ENCODE measurements at regions of chr17 and their contacts with region 1.

Region 1: DNA sequence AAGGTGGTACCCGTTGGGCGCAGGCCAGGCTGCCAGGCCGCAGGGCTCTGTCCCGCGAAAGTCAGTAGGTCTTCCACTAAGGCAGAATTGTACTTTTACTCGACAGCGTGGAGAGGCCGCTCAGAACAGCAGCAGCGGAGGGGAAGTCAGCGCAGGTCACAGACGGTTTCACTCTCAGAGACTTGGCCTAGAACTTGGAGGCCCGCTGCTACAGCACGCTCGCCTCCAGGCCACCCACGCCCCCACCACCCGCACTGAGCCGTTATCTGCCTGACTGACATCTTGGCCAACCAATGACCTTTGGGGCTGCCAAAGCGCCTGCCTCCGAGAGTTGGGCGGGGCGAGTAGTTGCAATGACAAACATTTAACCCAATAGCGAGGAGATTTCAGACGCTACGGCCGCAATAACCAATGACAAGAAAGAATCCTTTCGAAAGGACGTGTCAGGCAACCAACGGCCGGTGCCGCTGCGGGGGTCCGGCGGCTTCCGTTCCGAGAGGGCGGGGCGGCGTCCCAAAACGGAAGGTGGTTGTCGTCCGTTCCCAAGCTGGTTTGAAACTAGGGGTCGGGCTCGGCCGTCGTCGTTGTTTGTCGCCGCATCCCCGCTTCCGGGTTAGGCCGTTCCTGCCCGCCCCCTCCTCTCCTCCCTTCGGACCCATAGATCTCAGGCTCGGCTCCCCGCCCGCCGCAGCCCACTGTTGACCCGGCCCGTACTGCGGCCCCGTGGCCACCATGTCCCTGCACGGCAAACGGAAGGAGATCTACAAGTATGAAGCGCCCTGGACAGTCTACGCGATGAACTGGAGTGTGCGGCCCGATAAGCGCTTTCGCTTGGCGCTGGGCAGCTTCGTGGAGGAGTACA is at the start of gene DCAF7:
- DNase-seq: peak; percentile 100
- H3K4me3 ChIP-seq: peak within 1 kb of the TSS; percentile 66 to 95 (median 81)
- H3K27ac ChIP-seq: peak within 1 kb of the TSS; percentile 87 to 95 (median 89)
- H3K4me1 ChIP-seq: peaks cover 0 to 49% (median 43%) of the 10 kb centered on the region in 4 donors
- H3K27me3 ChIP-seq: no peaks in the 10 kb centered on the region
- CTCF ChIP-seq: no peak
- EP300 ChIP-seq: no peak
- POLR2A ChIP-seq: peak; percentile 48 to 57
- total RNA-seq, gene DCAF7: 19.7 to 28.9 (median 23.5) TPM

Region 2: DNA sequence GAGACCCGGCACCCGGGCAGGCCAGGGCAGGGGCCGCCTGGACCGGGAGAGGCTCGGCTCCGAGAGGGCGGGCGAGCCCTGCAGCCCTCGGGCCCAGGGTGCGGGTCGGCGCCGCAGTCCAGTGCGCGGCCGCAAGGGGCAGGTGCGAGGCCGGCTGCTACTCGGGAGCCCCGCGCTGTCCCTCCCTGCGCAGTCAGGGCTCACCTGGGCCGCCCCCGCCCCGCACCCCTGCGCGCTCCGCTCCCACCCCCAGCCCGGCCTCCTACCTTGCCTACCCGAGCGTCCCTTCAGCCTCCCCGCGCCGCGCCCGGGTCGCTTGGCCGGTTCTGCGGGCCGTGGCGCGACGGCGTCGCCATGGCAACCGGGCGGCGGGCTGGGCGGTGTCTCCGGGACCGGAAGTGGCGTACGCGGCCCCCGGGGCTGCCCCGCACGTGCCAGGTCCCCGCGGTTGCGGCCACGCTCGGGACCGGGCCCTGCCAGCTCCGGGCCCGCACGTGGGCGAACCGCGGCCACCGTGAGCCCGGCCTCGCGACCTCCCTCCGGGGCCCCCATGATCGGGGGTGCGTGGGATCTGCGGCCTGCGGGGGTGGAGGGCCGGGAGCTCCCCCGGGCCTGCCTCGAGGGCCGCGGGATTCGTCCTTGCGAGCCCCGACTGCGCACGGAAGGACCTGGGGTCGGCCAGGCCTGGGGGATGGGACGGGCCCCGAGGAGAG is 104.0 kb before region 1 on chr17 and contains the start of gene CYB561:
- intact Hi-C with region 1: loop called (anchors 1 kb)
- DNase-seq: peak; percentile 89
- H3K4me3 ChIP-seq: peak within 1 kb of the TSS; percentile 41 to 71 (median 63)
- H3K27ac ChIP-seq: peak within 1 kb of the TSS; percentile 67 to 80 (median 74)
- H3K4me1 ChIP-seq: peaks cover 0 to 28% (median 18%) of the 10 kb centered on the region in 4 donors
- H3K27me3 ChIP-seq: no peaks in the 10 kb centered on the region
- CTCF ChIP-seq: peak in 3 of 4 experiments; percentile 17 to 52 (median 41)
- EP300 ChIP-seq: no peak
- POLR2A ChIP-seq: no peak
- total RNA-seq, gene CYB561: 6.3 to 16.4 (median 12.9) TPM

Region 3: DNA sequence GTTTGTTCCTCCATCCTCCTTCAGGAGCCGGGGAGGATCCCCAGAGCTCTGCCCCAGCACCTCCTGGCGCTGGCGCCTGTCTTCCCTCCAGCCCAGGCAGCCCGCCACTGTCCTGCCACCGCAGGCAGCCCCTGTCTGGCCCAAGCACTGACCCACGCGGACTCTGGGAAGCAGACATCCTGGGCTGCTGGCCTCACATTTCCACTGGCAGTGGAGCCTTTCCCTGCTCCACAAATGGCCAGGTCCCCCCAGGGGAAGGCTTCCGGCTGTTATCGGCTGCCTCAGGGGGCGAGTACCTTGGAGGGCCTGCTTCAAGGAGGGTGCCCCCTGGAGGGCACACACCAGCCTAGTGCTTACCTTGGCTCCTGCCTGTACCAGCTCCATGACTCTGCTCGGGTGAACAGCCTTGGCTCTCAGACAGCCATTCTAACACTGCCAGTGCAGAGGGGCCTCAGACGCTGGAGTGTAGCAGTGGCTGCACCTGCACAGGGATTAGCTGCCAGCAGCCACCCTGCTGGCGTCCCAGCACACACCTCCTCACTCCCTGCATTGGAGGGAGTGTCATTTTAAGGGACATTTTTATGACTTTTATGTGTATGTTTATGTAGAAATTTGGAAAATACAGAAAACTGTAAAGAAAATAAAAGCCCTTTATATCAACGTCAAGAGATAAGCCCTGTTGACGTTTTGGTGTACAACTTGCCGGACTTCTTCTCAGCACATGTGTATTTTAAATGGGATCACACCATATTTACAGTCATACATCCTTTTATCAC is 52.3 kb before region 1 on chr17:
- intact Hi-C with region 1: no loop called
- DNase-seq: no peak
- H3K4me3 ChIP-seq: no peak overlapping the region
- H3K27ac ChIP-seq: no peak overlapping the region
- H3K4me1 ChIP-seq: no peaks in the 10 kb centered on the region
- H3K27me3 ChIP-seq: peaks cover 0 to 14% (median 0%) of the 10 kb centered on the region in 3 donors
- CTCF ChIP-seq: no peak
- EP300 ChIP-seq: no peak
- POLR2A ChIP-seq: no peak

Region 4: GRCh38 chr17:63564562-63564961 is 14.4 kb after region 1 on chr17:
- intact Hi-C with region 1: loop called (anchors 1 kb)
- DNase-seq: no peak
- H3K4me3 ChIP-seq: no peak overlapping the region
- H3K27ac ChIP-seq: no peak overlapping the region
- H3K4me1 ChIP-seq: peaks cover 0 to 13% (median 4%) of the 10 kb centered on the region in 4 donors
- H3K27me3 ChIP-seq: no peaks in the 10 kb centered on the region
- CTCF ChIP-seq: no peak
- EP300 ChIP-seq: no peak
- POLR2A ChIP-seq: no peak

Region 5: GRCh38 chr17:63600569-63601438 is 50.6 kb after region 1 on chr17 and contains the start of gene TACO1:
- intact Hi-C with region 1: loop called (anchors 5 kb)
- DNase-seq: peak; percentile 92
- H3K4me3 ChIP-seq: peak within 1 kb of the TSS; percentile 85 to 99 (median 98)
- H3K27ac ChIP-seq: peak within 1 kb of the TSS; percentile 89 to 95 (median 93)
- H3K4me1 ChIP-seq: peaks cover 0 to 27% (median 18%) of the 10 kb centered on the region in 4 donors
- H3K27me3 ChIP-seq: no peaks in the 10 kb centered on the region
- CTCF ChIP-seq: no peak
- EP300 ChIP-seq: peak in 1 of 4 donors; percentile 11
- POLR2A ChIP-seq: peak; percentile 43 to 59
- total RNA-seq, gene TACO1: 11.2 to 19.9 (median 14.3) TPM

Region 6: GRCh38 chr17:63621766-63622519 is 71.8 kb after region 1 on chr17 and contains the start of gene MAP3K3:
- intact Hi-C with region 1: no loop called
- DNase-seq: peak; percentile 100
- H3K4me3 ChIP-seq: peak within 1 kb of the TSS; percentile 77 to 90 (median 82)
- H3K27ac ChIP-seq: peak within 1 kb of the TSS; percentile 87 to 93 (median 91)
- H3K4me1 ChIP-seq: peaks cover 0 to 43% (median 41%) of the 10 kb centered on the region in 4 donors
- H3K27me3 ChIP-seq: no peaks in the 10 kb centered on the region
- CTCF ChIP-seq: peak in 2 of 4 experiments; percentile 5 to 17
- EP300 ChIP-seq: no peak
- POLR2A ChIP-seq: peak; percentile 52 to 72
- total RNA-seq, gene MAP3K3: 51.5 to 68.7 (median 59.8) TPM